ENCODE measurements at regions of chr16 and their contacts with region 1.

Region 1: DNA sequence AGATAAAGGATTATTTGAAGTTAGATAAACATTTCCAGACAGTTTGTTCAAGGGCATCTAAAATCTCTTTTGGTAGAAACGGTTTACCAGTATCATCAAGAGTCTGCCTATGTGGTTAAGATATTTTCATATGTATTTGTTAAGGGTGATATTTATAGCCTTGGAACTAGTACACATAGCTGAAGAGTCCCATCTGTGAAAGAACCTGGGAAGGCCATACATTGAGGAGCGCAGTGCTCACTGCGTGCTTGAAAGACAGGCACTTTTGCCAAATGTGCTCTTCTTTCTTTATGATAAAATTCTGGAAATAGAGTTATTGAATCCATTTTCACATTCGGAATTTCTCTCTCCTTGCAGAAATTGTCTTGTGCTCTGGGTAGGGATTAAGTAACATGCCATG is 7.7 kb downstream of the IGSF6 start:
- DNase-seq: no peak
- H3K4me3 ChIP-seq: peak overlapping the region in 1 of 4 donors; percentile 46
- H3K27ac ChIP-seq: peak overlapping the region; percentile 31 to 89 (median 84)
- H3K4me1 ChIP-seq: peaks cover 21 to 72% of the 10 kb centered on the region in 2 donors
- H3K27me3 ChIP-seq: no peaks in the 10 kb centered on the region
- CTCF ChIP-seq: no peak
- POLR2A ChIP-seq: no peak

Region 2: GRCh38 chr16:21584817-21585216 is 59.9 kb before region 1 on chr16:
- intact Hi-C with region 1: loop called in 1 of 2 experiments (anchors 5 kb)
- DNase-seq: no peak
- H3K4me3 ChIP-seq: no peak overlapping the region
- H3K27ac ChIP-seq: no peak overlapping the region
- H3K4me1 ChIP-seq: peaks cover 6 to 12% of the 10 kb centered on the region in 2 donors
- H3K27me3 ChIP-seq: no peaks in the 10 kb centered on the region
- CTCF ChIP-seq: no peak
- POLR2A ChIP-seq: no peak